ENCODE measurements at regions of chr3 and their contacts with region 1.

Region 1: DNA sequence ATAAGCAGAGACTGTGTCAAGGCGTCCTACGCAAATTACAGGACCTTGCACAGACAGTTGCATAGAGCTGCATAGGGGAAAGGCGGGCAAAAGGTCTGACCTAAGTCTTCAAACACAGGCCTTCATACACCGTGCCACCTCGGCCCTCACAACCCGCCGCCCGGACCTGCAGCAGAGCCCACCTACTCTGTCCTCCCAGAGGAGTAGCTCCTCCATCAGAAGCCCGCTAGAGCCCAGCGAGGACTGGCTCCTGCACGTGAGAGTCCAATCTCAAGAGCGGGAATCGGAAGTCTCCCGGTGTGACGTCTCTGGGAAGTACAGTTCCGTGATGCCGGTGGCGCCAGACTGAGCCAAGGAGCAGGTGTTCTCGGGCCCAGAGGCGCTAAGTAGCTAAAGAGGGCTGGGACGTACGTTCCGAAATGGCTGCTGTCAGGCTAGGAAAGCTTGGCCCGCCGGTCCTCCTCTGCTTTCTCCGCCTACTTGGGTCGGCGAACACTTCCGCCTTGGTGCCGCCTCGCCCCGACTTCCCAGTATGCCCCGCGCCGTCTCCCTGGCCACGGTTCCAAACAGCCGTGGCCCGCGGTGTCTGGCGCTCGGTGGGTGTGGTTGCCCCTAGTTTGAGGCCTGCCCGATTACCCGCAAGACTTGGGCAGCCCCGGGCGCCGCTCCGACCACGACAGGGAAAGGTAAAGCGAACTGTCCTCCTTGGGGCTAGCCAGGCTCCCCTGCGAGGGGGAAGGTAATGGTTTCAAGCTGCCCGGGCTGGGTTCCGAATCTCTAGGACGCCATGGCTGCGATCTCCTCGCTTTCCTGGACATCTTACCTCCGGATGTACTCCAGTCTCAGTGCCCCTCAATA is at the starts of genes ASTE1 and NEK11:
- DNase-seq: peak; percentile 87 to 95 (median 92)
- ATAC-seq: peak; percentile 99
- H3K4me3 ChIP-seq: peak within 1 kb of the TSS; percentile 97
- H3K4me3 Mint-ChIP-seq: peak within 1 kb of the TSS; percentile 85 to 96 (median 89)
- H3K27ac ChIP-seq: peak within 1 kb of the TSS; percentile 95
- H3K27ac Mint-ChIP-seq: peak within 1 kb of the TSS; percentile 96 to 99 (median 97)
- H3K4me1 ChIP-seq: peaks cover 34 to 40% of the 10 kb centered on the region in 2 donors
- H3K4me1 Mint-ChIP-seq: peaks cover 29 to 59% (median 52%) of the 10 kb centered on the region in 7 donors
- H3K27me3 ChIP-seq: no peaks in the 10 kb centered on the region
- H3K27me3 Mint-ChIP-seq: peaks cover 0 to 6% (median 0%) of the 10 kb centered on the region in 5 donors
- total RNA-seq, gene ASTE1: 18.7 to 38.5 (median 27.0) TPM
- total RNA-seq, gene NEK11: 1.7 to 9.0 (median 5.3) TPM

Region 2: DNA sequence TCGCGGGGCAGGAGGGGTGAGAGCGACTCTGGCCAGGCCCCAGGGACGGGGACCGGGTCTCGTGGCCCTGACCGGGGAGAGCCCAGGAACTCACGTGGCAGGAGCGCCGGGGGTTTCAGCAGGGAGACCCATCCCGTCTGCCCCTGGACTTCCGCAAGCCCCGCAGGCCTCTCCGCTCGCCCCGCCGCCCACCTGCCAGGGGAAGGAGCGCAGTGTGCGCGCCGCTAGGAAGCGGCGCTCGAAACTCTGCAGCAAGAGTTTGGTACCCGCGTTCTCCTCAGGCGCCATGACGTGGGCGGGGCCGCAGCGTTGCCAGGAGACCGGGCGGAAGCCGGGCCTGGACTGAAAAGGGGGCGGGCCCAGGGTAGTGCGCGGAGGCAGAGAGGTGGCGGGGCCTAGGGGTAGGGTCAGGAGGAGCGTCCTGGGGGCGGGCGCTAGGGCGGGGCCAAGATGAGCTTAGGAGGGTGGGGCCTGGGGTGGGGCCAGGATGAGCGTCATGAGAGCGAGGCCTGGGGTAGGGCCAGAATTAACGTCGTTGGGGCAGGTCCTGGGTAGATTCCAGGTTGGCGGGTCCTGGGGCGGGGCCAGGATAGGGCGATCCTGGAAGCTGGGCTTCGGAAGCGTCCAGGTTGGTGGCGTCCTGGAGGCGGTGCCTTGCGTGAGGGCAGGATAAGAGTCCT is 915.2 kb before region 1 on chr3:
- CTCF ChIA-PET with region 1: no interaction called
- POLR2A ChIA-PET with region 1: no interaction called
- intact Hi-C with region 1: loop called in 1 of 2 experiments (anchors 1 kb)
- DNase-seq: peak; percentile 96 to 99 (median 98)
- ATAC-seq: peak; percentile 100
- H3K4me3 ChIP-seq: peak overlapping the region; percentile 58
- H3K4me3 Mint-ChIP-seq: peak overlapping the region; percentile 85 to 100 (median 98)
- H3K27ac ChIP-seq: peak overlapping the region; percentile 90
- H3K27ac Mint-ChIP-seq: peak overlapping the region; percentile 91 to 100 (median 100)
- H3K4me1 ChIP-seq: no peaks in the 10 kb centered on the region
- H3K4me1 Mint-ChIP-seq: peaks cover 11 to 22% (median 13%) of the 10 kb centered on the region in 7 donors
- H3K27me3 ChIP-seq: no peaks in the 10 kb centered on the region
- H3K27me3 Mint-ChIP-seq: peaks cover 0 to 14% (median 0%) of the 10 kb centered on the region in 5 donors

Region 3: GRCh38 chr3:130850044-130850797 is 176.3 kb before region 1 on chr3:
- CTCF ChIA-PET with region 1: no interaction called
- POLR2A ChIA-PET with region 1: no interaction called
- intact Hi-C with region 1: loop called in 1 of 2 experiments (anchors 2 kb)
- DNase-seq: peak in 6 of 9 donors; percentile 1 to 55 (median 18)
- ATAC-seq: peak; percentile 85
- H3K4me3 ChIP-seq: no peak overlapping the region
- H3K4me3 Mint-ChIP-seq: peak overlapping the region in 6 of 10 donors; percentile 5 to 54 (median 33)
- H3K27ac ChIP-seq: no peak overlapping the region
- H3K27ac Mint-ChIP-seq: peak overlapping the region in 1 of 9 donors; percentile 76
- H3K4me1 ChIP-seq: peaks cover 0 to 8% of the 10 kb centered on the region in 2 donors
- H3K4me1 Mint-ChIP-seq: peaks cover 0 to 35% (median 13%) of the 10 kb centered on the region in 7 donors
- H3K27me3 ChIP-seq: no peaks in the 10 kb centered on the region
- H3K27me3 Mint-ChIP-seq: peaks cover 10 to 31% (median 17%) of the 10 kb centered on the region in 5 donors

Region 4: DNA sequence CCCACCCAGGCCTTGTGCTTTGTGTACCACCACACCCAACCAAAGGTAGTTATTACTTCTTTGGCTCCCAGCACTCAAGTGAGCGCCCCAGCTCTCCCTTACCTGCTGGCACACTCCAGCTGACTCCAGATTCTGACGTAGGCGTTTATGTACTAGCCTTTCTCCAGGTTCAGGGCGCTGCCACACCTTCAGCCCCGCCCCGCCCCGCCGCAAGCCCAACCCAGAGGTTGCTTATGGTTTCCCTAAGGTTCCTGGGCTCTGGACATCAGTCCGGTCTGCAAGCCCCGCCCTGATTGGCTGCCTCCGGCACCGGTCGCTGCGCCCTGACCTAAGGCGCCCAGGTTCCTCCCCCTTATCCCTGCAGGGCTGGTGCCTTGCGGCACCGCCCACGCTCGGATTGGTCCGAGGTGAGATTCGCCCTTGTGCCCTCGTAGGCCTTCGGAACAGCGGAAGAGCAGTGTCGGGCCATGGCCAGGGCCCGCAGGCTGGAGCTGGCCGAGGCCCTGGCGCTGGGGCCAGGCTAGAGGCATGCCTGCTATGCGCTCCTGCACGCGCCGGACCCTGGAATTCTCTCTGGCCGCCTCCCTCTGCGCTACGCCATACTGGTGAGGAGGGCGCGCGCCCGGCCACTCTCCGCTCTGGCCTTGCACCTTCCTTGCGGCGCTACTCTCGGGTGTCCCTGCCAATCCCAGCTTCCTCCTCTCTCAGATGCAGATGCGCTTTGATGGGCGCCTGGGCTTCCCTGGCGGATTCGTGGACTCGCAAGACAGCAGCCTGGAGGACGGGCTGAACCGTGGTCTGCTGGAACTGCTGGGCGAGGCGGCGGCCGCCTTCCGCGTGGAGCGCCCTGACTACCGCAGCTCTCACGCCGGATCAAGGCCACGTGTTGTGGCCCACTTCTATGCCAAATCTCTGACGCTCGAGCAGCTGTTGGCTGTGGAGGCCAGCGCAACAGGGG is 335.2 kb after region 1 on chr3:
- CTCF ChIA-PET with region 1: no interaction called
- POLR2A ChIA-PET with region 1: no interaction called
- intact Hi-C with region 1: no loop called
- DNase-seq: peak in 2 of 9 donors; percentile 14 to 27
- ATAC-seq: peak; percentile 89
- H3K4me3 ChIP-seq: no peak overlapping the region
- H3K4me3 Mint-ChIP-seq: peak overlapping the region; percentile 15 to 84 (median 66)
- H3K27ac ChIP-seq: no peak overlapping the region
- H3K27ac Mint-ChIP-seq: peak overlapping the region in 1 of 9 donors; percentile 30
- H3K4me1 ChIP-seq: no peaks in the 10 kb centered on the region
- H3K4me1 Mint-ChIP-seq: peaks cover 5 to 16% (median 13%) of the 10 kb centered on the region in 7 donors
- H3K27me3 ChIP-seq: peaks cover 0 to 4% of the 10 kb centered on the region in 2 donors
- H3K27me3 Mint-ChIP-seq: peaks cover 38 to 62% (median 44%) of the 10 kb centered on the region in 5 donors

Region 5: GRCh38 chr3:131381444-131382291 is 355.1 kb after region 1 on chr3 and contains the start of gene NUDT16:
- CTCF ChIA-PET with region 1: no interaction called
- POLR2A ChIA-PET with region 1: interaction called, 6 read pairs
- intact Hi-C with region 1: loop called (anchors 1 kb)
- DNase-seq: peak; percentile 86 to 97 (median 91)
- ATAC-seq: peak; percentile 99
- H3K4me3 ChIP-seq: peak within 1 kb of the TSS; percentile 90
- H3K4me3 Mint-ChIP-seq: peak within 1 kb of the TSS; percentile 93 to 98 (median 96)
- H3K27ac ChIP-seq: peak within 1 kb of the TSS; percentile 69
- H3K27ac Mint-ChIP-seq: peak within 1 kb of the TSS; percentile 90 to 98 (median 95)
- H3K4me1 ChIP-seq: peaks cover 6 to 14% of the 10 kb centered on the region in 2 donors
- H3K4me1 Mint-ChIP-seq: peaks cover 30 to 51% (median 42%) of the 10 kb centered on the region in 7 donors
- H3K27me3 ChIP-seq: no peaks in the 10 kb centered on the region
- H3K27me3 Mint-ChIP-seq: no peaks in the 10 kb centered on the region
- total RNA-seq, gene NUDT16: 7.1 to 14.5 (median 12.9) TPM

Region 6: DNA sequence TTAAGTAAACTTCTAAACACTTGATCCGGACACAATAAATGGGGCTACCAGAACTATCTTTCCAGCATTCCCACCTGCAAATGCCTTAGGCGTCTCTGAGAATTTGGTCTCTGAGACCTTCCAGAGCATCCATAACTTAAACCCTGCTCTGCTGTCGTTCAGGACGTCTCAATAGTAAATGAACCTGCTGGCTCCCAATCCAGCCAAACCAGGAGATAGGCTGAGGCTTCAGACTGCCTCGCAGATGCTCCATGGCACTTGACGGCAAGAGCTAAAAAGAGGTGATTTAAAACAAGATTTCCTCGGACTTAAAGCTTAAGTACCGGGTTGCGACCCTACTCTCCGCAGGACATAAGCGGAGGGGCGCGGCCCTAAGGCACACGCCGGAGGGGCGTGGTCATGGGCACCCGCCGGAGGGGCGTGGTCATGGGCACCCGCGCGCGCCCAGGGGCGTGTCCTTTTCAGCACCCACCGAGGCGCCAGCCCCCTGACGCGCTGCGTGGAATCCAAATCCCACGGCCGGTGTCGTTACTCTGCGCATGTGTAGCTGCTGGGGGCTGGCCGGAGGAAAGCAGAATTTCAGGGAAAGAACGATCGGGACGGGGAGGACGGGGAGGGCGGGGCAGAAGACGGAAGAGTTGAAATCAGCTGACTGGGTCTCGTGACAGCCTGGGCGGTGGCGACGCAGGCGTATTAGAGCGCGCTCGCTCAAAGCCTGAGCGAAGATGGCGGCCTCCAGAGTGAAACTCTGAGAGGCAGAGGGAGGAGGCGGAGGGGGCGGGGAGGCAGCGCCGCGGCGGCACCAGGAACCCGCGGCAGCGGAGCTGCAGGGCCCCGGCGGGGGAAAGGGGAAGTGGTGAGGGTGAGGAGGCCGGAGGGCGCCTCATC is 1390.5 kb after region 1 on chr3 and contains the start of gene DNAJC13:
- CTCF ChIA-PET with region 1: no interaction called
- POLR2A ChIA-PET with region 1: no interaction called
- intact Hi-C with region 1: loop called (anchors 1 kb)
- DNase-seq: peak; percentile 80 to 93 (median 92)
- ATAC-seq: peak; percentile 97
- H3K4me3 ChIP-seq: peak within 1 kb of the TSS; percentile 94
- H3K4me3 Mint-ChIP-seq: peak within 1 kb of the TSS; percentile 97 to 100 (median 99)
- H3K27ac ChIP-seq: peak within 1 kb of the TSS; percentile 82
- H3K27ac Mint-ChIP-seq: peak within 1 kb of the TSS; percentile 93 to 99 (median 98)
- H3K4me1 ChIP-seq: peaks cover 7 to 11% of the 10 kb centered on the region in 2 donors
- H3K4me1 Mint-ChIP-seq: peaks cover 12 to 40% (median 33%) of the 10 kb centered on the region in 7 donors
- H3K27me3 ChIP-seq: no peaks in the 10 kb centered on the region
- H3K27me3 Mint-ChIP-seq: peaks cover 0 to 4% (median 0%) of the 10 kb centered on the region in 5 donors
- total RNA-seq, gene DNAJC13: 23.6 to 41.5 (median 37.5) TPM

Region 7: DNA sequence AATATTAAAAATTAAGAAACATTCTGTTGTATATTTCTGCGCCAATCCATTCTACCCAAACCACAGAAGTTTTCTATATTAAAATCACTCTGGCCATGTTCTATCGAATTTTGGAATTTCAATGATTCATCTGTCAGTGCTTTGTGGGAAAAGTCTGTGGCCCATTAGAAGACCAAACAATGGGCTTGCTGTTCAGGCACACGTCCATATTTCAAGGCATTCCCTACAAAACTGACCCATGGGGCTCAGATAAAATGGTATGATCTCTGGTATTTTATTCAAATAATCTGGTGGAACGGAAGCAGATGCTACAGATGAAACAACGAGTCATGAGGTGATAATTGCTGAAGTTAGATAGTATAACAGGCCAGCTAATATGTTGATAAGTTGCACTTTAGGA is 1683.2 kb after region 1 on chr3:
- CTCF ChIA-PET with region 1: no interaction called
- POLR2A ChIA-PET with region 1: no interaction called
- intact Hi-C with region 1: loop called in 1 of 2 experiments (anchors 10 kb)
- DNase-seq: no peak
- ATAC-seq: no peak
- H3K4me3 ChIP-seq: no peak overlapping the region
- H3K4me3 Mint-ChIP-seq: no peak overlapping the region
- H3K27ac ChIP-seq: no peak overlapping the region
- H3K27ac Mint-ChIP-seq: peak overlapping the region in 1 of 9 donors; percentile 66
- H3K4me1 ChIP-seq: no peaks in the 10 kb centered on the region
- H3K4me1 Mint-ChIP-seq: peaks cover 3 to 33% (median 13%) of the 10 kb centered on the region in 7 donors
- H3K27me3 ChIP-seq: no peaks in the 10 kb centered on the region
- H3K27me3 Mint-ChIP-seq: no peaks in the 10 kb centered on the region